CD4-positive, alpha-beta memory T cell (primary cell): ENCODE measurements at regions of chr1 and their contacts with region 1.

Region 1: DNA sequence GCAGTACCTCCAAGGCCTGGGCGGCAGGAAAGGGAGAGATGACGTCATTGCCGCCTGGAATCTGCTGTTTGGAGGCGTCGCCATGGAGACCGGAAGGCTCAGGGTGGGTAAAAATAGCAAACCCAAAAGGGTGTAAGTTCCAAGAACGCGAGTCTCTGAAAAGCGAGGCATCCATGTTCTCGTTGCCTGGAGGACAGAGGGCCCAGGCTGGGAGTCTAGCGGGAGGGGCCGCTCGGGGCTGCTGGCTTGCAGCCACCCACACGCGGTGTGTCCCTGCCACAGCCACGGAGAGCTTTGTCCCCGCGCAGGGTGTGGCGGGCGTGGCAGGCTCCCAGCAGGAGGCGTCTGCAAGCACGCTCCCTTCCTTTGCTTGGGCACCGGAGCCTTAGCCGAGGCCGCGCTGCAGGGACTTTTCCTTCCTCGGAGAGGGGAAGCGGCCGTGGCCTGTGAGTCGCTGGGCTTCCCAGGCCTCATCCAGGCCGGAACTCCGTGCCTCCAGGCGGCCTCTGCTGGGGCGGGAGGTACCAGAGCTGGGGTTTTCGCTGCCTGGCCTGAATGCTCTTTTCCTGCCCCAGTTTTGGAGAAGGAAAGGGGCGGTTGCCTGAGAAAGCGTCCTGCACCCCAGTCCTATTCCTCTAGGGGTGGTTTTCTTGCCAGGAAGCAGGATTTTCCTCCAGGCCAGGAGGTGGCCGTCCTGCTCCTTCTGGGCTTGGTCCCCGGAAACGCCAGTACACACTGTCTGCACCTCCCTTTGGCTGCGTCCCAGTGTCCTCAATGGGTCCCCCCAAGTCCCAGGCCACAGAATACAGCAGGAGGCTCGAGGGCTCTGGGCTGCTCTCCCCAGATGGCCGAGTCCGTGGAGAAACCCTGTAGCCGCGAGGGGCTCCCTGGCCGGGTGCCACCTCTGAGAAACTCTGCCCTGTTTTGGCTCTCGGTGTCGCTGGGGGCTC is 15.3 kb upstream of the SKI start:
- DNase-seq: peak; percentile 56 to 73 (median 65)
- H3K4me3 ChIP-seq: peak overlapping the region in 1 of 2 donors; percentile 34
- H3K4me3 Mint-ChIP-seq: peak overlapping the region in 5 of 8 donors; percentile 13 to 60 (median 44)
- H3K27ac ChIP-seq: peak overlapping the region; percentile 4
- H3K27ac Mint-ChIP-seq: peak overlapping the region in 2 of 7 donors; percentile 29 to 53
- H3K4me1 ChIP-seq: peaks cover 15% of the 10 kb centered on the region
- H3K4me1 Mint-ChIP-seq: peaks cover 0 to 9% (median 1%) of the 10 kb centered on the region in 4 donors
- H3K27me3 ChIP-seq: no peaks in the 10 kb centered on the region
- H3K27me3 Mint-ChIP-seq: no peaks in the 10 kb centered on the region

Region 2: DNA sequence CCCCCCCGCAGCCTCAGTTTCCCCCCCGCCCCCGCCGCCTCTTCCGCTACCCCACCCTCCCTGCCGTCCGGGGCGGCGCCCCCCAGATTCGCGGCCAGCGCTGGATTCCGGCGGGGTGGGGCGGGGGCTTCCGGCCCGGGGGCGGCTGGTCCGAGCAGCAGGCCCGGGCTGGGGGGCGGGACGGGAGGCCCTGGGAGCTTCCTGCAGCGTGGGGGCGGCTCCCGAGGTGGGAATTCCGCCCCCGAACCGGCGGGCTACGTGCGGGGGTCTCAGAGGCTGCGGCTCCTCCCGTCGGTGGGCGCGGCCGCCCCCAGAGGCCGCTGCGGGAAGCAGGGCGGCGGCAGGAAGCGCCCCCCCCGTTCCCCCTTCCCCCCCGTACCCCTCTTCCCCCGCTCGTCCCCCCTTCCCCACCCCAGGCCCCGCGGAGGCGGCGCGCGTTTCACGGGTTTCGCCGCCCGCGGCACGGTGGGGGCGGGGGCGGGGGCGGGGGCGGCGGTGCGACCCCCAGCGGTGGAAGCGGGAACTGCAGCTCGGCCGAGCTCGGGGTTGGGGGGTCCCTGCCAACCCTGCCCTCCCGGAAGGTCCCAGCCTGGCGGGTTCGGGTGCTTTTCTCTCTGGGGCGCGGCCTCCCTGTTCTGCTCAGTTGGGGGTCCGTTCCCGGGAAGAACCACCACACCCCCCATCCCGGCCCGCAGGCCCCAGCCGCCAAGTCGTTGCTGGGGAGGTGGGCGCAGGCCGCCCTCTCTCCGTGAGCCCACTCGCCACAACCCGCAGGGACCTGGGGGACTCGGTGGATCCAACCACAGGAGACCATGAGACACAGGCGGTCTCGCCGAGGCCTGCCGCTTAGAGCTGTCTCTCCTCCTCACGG is 102.2 kb after region 1 on chr1:
- CTCF ChIA-PET with region 1: interaction called, 3 read pairs
- POLR2A ChIA-PET with region 1: no interaction called
- intact Hi-C with region 1: loop called (anchors 1 kb)
- DNase-seq: peak; percentile 65 to 71 (median 67)
- H3K4me3 ChIP-seq: no peak overlapping the region
- H3K4me3 Mint-ChIP-seq: peak overlapping the region in 6 of 8 donors; percentile 21 to 70 (median 55)
- H3K27ac ChIP-seq: peak overlapping the region; percentile 63
- H3K27ac Mint-ChIP-seq: peak overlapping the region in 5 of 7 donors; percentile 36 to 79 (median 74)
- H3K4me1 ChIP-seq: peaks cover 42% of the 10 kb centered on the region
- H3K4me1 Mint-ChIP-seq: peaks cover 2 to 9% (median 4%) of the 10 kb centered on the region in 4 donors
- H3K27me3 ChIP-seq: no peaks in the 10 kb centered on the region
- H3K27me3 Mint-ChIP-seq: no peaks in the 10 kb centered on the region

Region 3: GRCh38 chr1:2352840-2353550 is 140.2 kb after region 1 on chr1:
- CTCF ChIA-PET with region 1: no interaction called
- POLR2A ChIA-PET with region 1: no interaction called
- intact Hi-C with region 1: no loop called
- DNase-seq: no peak
- H3K4me3 ChIP-seq: no peak overlapping the region
- H3K4me3 Mint-ChIP-seq: no peak overlapping the region
- H3K27ac ChIP-seq: no peak overlapping the region
- H3K27ac Mint-ChIP-seq: peak overlapping the region in 1 of 7 donors; percentile 29
- H3K4me1 ChIP-seq: no peaks in the 10 kb centered on the region
- H3K4me1 Mint-ChIP-seq: no peaks in the 10 kb centered on the region
- H3K27me3 ChIP-seq: no peaks in the 10 kb centered on the region
- H3K27me3 Mint-ChIP-seq: no peaks in the 10 kb centered on the region